WTC11 (cell line): ENCODE measurements at regions of chr19 and their contacts with region 1.

Region 1: DNA sequence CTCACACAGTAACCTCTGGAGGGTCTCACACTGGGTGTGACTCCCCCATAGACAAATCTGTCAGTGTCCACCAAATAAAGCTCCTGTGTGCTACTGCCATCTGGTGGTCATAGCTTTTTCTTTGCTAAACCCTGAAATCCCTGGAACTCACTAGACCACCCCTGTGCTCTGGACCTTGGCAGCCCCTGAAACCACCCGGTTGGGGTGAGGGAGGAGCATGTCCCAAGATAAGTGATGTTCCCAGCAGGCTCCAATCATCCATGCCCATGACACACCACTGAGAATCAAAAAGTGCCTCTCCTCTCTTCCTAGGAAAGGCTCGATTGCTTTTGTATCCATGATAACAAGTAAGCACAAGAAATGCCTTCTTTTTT is 6.5 kb upstream of the HSD17B14 start:
- DNase-seq: peak; percentile 71
- ATAC-seq: peak; percentile 87
- H3K4me3 Mint-ChIP-seq: no peak overlapping the region
- H3K27ac Mint-ChIP-seq: no peak overlapping the region
- H3K4me1 Mint-ChIP-seq: peaks cover 6% of the 10 kb centered on the region
- H3K27me3 Mint-ChIP-seq: no peaks in the 10 kb centered on the region; the same call in 1 of the 2 replicates
- CTCF ChIP-seq: peak; percentile 70

Region 2: DNA sequence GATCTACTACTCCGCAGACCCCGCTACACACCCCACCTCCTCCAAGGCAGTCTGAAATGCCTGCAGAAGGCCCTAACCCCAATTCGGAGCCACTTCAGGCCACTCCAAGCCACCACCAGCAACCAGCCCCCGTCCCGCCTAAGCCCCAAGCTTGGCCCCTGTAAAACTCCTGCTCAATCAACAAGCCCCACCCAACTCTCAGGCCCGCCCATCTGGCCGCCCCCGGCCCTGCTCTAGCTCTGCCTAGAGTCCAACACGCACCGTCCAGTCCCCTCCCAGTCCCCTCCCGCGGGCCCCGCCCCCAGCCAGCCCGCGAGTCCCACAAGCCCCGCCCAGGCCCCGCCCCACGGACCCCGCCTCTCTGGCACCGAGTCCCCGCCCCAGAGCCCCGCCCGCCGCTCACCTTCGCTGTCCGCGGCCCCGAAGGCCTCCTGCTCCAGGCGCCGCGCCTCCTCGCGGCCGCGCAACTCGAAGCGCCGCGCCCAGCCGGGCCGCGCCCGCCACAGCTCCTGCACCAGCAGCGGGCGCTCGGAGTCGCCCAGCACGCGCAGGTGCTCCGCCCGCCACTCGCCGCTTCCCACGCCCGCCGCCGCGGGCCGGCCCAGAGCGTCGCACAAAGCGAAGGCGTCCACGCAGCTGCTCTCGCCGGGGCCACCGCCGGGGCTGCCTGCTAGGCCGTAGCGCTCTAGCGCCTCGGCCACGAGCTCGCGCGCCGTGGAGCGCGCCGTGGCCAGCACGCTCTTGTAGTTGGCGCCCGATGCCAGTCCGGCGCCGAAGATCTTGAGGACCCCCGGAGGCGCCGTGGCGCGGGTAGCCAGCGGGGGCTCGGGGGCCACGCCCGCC is 104.0 kb before region 1 on chr19:
- CTCF ChIA-PET with region 1: interaction called, 10 read pairs
- POLR2A ChIA-PET with region 1: no interaction called
- DNase-seq: peak; percentile 99
- ATAC-seq: peak; percentile 81
- H3K4me3 Mint-ChIP-seq: peak overlapping the region; percentile 63
- H3K27ac Mint-ChIP-seq: peak overlapping the region; percentile 94
- H3K4me1 Mint-ChIP-seq: peaks cover 42% of the 10 kb centered on the region
- H3K27me3 Mint-ChIP-seq: peaks cover 49% of the 10 kb centered on the region
- CTCF ChIP-seq: no peak

Region 3: GRCh38 chr19:48770260-48770659 is 72.5 kb before region 1 on chr19:
- CTCF ChIA-PET with region 1: no interaction called
- POLR2A ChIA-PET with region 1: no interaction called
- DNase-seq: no peak
- ATAC-seq: no peak
- H3K4me3 Mint-ChIP-seq: no peak overlapping the region
- H3K27ac Mint-ChIP-seq: no peak overlapping the region
- H3K4me1 Mint-ChIP-seq: peaks cover 12% of the 10 kb centered on the region
- H3K27me3 Mint-ChIP-seq: peaks cover 17% of the 10 kb centered on the region
- CTCF ChIP-seq: no peak

Region 4: GRCh38 chr19:48795055-48795684 is 47.6 kb before region 1 on chr19:
- CTCF ChIA-PET with region 1: interaction called, 76 read pairs
- POLR2A ChIA-PET with region 1: no interaction called
- DNase-seq: peak; percentile 94
- ATAC-seq: peak; percentile 96
- H3K4me3 Mint-ChIP-seq: peak overlapping the region; percentile 96
- H3K27ac Mint-ChIP-seq: peak overlapping the region; percentile 98
- H3K4me1 Mint-ChIP-seq: peaks cover 18% of the 10 kb centered on the region
- H3K27me3 Mint-ChIP-seq: no peaks in the 10 kb centered on the region; the same call in none of the 2 replicates
- CTCF ChIP-seq: peak; percentile 92

Region 5: GRCh38 chr19:48826606-48827020 is 16.2 kb before region 1 on chr19:
- CTCF ChIA-PET with region 1: interaction called, 29 read pairs
- POLR2A ChIA-PET with region 1: no interaction called
- DNase-seq: peak; percentile 75
- ATAC-seq: peak; percentile 75
- H3K4me3 Mint-ChIP-seq: no peak overlapping the region
- H3K27ac Mint-ChIP-seq: no peak overlapping the region
- H3K4me1 Mint-ChIP-seq: no peaks in the 10 kb centered on the region
- H3K27me3 Mint-ChIP-seq: no peaks in the 10 kb centered on the region; the same call in 1 of the 2 replicates
- CTCF ChIP-seq: peak; percentile 43

Region 6: DNA sequence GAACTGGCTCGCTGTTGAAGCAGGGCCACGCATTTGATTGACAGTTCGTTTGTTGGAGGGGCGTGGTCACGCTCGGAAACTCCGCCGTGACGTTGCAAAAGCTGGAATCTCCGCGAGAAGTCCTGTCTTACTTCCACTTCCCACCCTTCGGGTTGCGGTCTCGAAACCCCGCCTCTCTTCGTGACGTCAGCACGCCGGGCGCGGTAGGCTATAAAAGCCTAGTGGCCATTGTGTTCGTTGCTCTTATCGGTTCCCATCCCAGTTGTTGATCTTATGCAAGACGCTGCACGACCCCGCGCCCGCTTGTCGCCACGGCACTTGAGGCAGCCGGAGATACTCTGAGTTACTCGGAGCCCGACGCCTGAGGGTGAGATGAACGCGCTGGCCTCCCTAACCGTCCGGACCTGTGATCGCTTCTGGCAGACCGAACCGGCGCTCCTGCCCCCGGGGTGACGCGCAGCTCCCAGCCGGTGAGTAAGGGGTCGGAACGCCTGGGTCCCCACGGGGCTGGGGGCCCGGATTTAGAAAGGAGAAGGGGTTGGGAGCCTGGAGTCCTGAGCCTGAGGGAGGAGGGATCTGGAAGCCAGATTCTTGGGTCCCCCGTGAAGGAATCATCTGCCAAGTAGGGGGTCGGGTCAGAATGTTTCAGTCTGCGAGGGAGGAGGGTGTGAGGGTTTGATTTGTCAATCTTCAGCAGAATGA is 29.6 kb after region 1 on chr19 and contains the start of gene PPP1R15A:
- CTCF ChIA-PET with region 1: interaction called, 10 read pairs
- POLR2A ChIA-PET with region 1: interaction called, 5 read pairs
- DNase-seq: peak; percentile 99
- ATAC-seq: peak; percentile 73
- H3K4me3 Mint-ChIP-seq: peak within 1 kb of the TSS; percentile 100
- H3K27ac Mint-ChIP-seq: peak within 1 kb of the TSS; percentile 100
- H3K4me1 Mint-ChIP-seq: peaks cover 33% of the 10 kb centered on the region
- H3K27me3 Mint-ChIP-seq: no peaks in the 10 kb centered on the region
- CTCF ChIP-seq: no peak
- total RNA-seq, gene PPP1R15A: 17.0 to 19.5 TPM (median 17.9 TPM) in 3 replicates